Testis (tissue), 5 donors: ENCODE measurements at regions of chr20 and their contacts with region 1.

Region 1: GRCh38 chr20:49541733-49542513 is 26.0 kb downstream of the PTGIS start:
- DNase-seq: peak; percentile 85
- H3K4me3 ChIP-seq: no peak overlapping the region
- H3K27ac ChIP-seq: no peak overlapping the region
- H3K4me1 ChIP-seq: no peaks in the 10 kb centered on the region
- H3K27me3 ChIP-seq: no peaks in the 10 kb centered on the region
- CTCF ChIP-seq: peak; percentile 91 to 96 (median 93)
- POLR2A ChIP-seq: no peak

Region 2: GRCh38 chr20:49608743-49609670 is 67.1 kb after region 1 on chr20:
- intact Hi-C with region 1: loop called (anchors 5 kb)
- DNase-seq: peak; percentile 75
- H3K4me3 ChIP-seq: no peak overlapping the region
- H3K27ac ChIP-seq: no peak overlapping the region
- H3K4me1 ChIP-seq: no peaks in the 10 kb centered on the region
- H3K27me3 ChIP-seq: no peaks in the 10 kb centered on the region
- CTCF ChIP-seq: peak; percentile 94 to 98 (median 97)
- POLR2A ChIP-seq: no peak

Region 3: DNA sequence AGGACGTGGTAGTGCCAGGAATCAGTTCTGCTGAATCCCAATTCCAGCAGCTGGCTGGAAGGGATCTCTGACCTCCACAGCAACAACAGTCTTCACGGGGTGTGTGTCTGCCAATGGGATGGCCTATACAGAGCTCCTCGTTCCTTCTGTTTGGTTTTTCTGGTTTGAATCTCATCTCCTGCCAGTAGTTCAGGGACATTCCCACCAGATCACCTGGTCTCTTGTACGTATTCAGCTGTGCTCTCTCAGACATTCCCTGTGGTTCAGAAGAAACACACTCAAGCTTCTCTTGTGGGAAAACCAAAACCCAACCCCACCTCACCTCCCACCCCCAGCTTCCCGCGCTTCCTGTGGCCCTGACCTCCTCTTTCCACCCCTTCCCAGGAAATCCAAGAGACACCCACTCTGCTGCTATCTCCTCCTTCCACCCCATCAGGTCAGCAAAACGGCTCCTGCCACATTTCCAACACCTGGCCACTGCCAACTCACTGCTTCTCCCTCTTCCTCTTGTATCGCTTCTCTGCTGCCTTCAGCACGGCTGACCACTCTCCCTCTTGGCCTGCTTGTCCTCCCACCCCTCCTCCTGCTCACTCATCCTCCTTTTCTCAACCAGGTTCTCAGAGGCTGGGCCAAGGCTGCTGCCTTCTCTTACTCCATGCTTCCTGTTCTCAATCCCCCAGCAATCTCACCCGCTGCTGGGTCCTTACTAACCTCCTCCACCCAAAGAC is 89.3 kb after region 1 on chr20:
- intact Hi-C with region 1: no loop called
- DNase-seq: peak; percentile 66
- H3K4me3 ChIP-seq: no peak overlapping the region
- H3K27ac ChIP-seq: peak overlapping the region; percentile 65 to 72
- H3K4me1 ChIP-seq: peaks cover 38% of the 10 kb centered on the region
- H3K27me3 ChIP-seq: no peaks in the 10 kb centered on the region
- CTCF ChIP-seq: no peak
- POLR2A ChIP-seq: no peak